Activated CD4-positive, alpha-beta memory T cell treated with anti-CD3 and anti-CD28 coated beads for 36 hours (primary cell): ENCODE measurements at regions of chr21 and their contacts with region 1.

Region 1: DNA sequence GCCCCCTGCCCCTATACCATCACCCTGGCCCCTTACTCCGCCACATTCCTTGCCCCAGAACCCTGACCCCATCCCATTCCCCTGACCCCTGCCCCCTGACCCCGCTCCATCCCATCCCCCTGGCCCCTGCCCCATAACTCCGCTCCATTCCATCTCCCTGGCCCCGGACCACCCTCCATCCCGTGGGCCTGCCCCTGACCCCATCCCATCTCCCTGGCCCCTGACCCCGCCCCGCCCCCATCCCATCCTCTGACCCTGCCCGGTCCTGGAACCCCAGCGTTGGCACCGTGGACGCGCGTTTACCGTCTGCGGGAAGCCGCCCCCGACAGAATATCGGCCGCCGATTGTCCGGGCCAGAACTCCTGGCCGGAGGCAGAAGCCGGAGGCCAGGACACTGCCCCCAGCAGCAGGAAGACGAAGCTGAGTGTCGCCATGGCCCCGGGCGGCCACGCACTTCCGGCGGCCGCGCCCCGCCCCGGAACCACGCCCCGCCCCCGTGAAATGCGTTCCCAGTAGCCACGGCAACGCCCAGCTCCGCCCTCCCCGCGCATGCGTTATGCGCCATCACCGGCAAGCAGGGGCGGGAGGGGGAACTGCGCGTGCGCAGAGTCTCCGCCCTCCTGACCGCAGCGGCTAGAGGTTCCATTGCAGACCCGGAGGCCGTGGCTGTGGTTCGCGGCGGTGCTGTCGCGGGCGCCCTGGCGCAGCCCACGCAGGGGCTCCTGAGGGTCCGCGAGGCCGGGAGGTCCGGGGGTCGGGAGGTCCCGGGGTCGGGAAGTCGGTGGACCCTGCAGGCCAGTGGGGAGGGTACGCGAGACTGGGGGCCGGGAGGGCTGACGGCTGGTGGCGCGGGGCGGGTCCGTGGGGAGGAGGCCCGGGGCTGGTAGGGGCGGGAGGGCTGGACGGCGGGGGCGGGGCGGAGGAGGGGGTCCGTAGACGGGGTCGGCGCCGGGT is at the start of gene POFUT2:
- DNase-seq: peak; percentile 99
- H3K4me3 Mint-ChIP-seq: peak within 1 kb of the TSS; percentile 77
- H3K27ac Mint-ChIP-seq: peak within 1 kb of the TSS; percentile 69
- H3K4me1 Mint-ChIP-seq: peaks cover 24% of the 10 kb centered on the region
- H3K27me3 Mint-ChIP-seq: no peaks in the 10 kb centered on the region
- total RNA-seq, gene POFUT2: 14.3 TPM

Region 2: DNA sequence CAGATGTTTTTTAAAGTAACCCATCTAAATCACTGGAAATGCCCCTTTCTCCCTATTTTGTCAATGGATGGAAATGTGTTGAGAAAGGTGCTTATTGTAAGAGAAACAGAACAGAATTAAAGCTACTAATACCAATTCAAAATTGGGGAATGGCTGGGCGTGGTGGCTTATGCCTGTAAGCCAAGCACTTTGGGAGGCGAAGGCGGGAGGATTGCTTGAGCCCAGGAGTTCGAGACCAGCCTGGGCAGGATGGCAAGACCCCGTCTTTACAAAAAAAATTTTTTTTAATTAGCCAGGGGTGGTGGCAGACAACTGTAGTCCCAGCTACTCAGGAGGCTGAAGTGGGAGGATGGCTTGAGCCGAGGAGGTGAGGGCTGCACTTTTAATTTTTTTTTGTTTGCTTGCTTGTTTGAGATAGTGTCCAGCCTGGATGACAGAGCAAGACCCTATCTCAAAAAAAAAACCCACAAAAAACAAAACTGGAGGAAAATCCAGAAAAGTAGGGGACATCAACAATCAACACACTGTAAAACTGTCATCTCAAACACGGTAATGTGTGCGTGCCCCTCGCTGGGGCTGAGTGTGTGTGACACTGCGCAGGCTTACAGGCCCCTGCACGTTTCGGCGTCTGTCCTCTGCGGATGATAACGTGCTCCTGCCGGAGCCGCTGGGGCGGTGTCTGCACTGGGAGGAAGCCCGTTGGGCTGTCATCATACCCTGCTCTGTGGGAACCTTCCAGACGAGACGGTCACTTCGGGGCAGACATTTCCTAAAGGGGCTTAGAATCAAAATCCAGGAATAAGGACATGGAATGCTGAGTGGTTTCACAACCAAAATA is 11.5 kb after region 1 on chr21:
- CTCF ChIA-PET with region 1: no interaction called
- POLR2A ChIA-PET with region 1: no interaction called
- intact Hi-C with region 1: no loop called
- DNase-seq: no peak
- H3K4me3 Mint-ChIP-seq: no peak overlapping the region
- H3K27ac Mint-ChIP-seq: no peak overlapping the region
- H3K4me1 Mint-ChIP-seq: peaks cover 3% of the 10 kb centered on the region
- H3K27me3 Mint-ChIP-seq: peaks cover 2% of the 10 kb centered on the region

Region 3: DNA sequence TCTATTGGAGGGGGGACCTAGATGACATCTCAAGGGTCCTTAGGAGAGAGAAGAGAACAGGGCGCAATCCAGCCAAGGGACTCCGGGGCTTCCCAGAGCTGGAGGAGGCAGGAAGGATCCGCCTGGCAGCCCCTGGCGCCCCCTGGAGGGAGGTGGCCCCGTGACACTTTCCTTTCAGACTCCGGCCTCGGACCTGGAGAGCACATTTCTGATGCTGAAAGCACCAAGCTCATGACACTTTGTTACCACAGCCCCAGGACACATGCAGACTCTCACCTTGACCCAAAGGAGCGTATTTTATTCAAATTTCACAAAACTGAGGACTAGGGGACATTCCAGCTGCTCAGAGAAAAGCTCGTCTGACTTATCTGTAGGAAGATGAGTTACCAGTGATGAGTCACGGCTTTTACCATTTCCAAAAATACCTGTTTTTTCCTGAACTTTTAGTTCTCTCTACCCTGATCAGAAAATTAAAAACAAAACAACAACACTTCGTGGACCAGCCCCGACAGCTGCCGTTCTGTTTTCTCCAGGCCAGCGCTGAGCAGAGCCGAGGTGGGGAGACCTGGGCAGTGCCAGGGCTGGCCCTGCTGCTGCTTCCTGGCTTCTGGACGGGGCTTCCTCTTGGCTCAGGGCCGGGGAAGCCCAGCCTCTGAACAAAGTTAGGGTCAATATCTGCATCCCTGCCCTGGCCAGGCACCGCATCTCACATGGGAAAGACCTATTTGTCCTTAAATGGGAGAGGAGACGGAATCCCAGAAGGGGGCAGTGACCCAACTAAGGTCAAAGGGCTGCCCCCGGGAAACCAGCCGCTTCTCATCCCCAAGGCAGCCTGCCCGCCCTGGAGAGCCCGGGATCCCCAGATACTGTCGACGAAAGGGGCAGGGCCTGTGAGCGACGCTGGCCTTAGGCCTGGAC is 21.6 kb after region 1 on chr21:
- CTCF ChIA-PET with region 1: interaction called, 14 read pairs
- POLR2A ChIA-PET with region 1: interaction called, 5 read pairs
- intact Hi-C with region 1: no loop called
- DNase-seq: peak; percentile 66
- H3K4me3 Mint-ChIP-seq: no peak overlapping the region
- H3K27ac Mint-ChIP-seq: no peak overlapping the region
- H3K4me1 Mint-ChIP-seq: peaks cover 8% of the 10 kb centered on the region
- H3K27me3 Mint-ChIP-seq: peaks cover 6% of the 10 kb centered on the region

Region 4: GRCh38 chr21:45439161-45439872 is 151.6 kb after region 1 on chr21:
- CTCF ChIA-PET with region 1: interaction called, 28 read pairs
- POLR2A ChIA-PET with region 1: interaction called, 3 read pairs
- intact Hi-C with region 1: loop called (anchors 1 kb)
- DNase-seq: peak; percentile 88
- H3K4me3 Mint-ChIP-seq: peak overlapping the region; percentile 37
- H3K27ac Mint-ChIP-seq: no peak overlapping the region
- H3K4me1 Mint-ChIP-seq: peaks cover 6% of the 10 kb centered on the region
- H3K27me3 Mint-ChIP-seq: peaks cover 7% of the 10 kb centered on the region